ENCODE measurements at regions of chr12 and their contacts with region 1.

Region 1: DNA sequence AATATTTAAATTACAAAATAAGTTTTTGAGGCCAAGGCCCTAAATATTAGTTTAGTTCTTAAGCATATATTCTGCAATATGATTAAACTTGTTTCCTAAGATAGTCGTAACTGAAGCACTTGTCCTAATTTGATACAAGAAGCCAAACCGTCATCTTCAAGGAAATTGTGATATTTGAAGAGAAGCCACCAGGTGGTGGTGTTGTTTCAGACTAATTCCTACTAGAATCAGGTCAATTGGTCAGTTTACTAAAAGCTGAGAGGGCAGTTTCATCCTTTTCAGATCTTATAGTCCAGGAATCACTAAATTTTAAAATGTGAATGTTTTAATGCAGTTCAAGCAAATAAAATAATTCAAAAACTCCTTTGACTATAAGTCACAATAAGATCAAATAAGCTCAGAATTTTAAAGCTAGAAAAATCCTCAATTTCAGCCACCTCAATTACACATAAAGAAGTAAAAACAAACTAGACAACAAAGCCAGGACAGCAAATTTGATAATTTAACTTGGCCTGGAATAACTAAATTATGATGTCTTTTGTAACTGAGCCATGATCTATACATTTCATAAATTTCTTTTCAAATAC is 7.1 kb upstream of the ARL1 start:
- DNase-seq: no peak
- H3K4me3 ChIP-seq: no peak overlapping the region
- H3K27ac ChIP-seq: no peak overlapping the region
- H3K4me1 ChIP-seq: no peaks in the 10 kb centered on the region
- H3K27me3 ChIP-seq: no peaks in the 10 kb centered on the region
- CTCF ChIP-seq: peak in 2 of 3 experiments; percentile 39 to 55
- POLR2A ChIP-seq: no peak

Region 2: GRCh38 chr12:101759396-101760047 is 344.9 kb after region 1 on chr12:
- intact Hi-C with region 1: loop called (anchors 10 kb)
- DNase-seq: no peak
- H3K4me3 ChIP-seq: no peak overlapping the region
- H3K27ac ChIP-seq: no peak overlapping the region
- H3K4me1 ChIP-seq: peaks cover 7% of the 10 kb centered on the region
- H3K27me3 ChIP-seq: no peaks in the 10 kb centered on the region
- CTCF ChIP-seq: peak; percentile 41 to 59 (median 47)
- POLR2A ChIP-seq: no peak

Measured in vagina (tissue), 2 donors.